ENCODE measurements at regions of chr4 and their contacts with region 1.

Region 1: DNA sequence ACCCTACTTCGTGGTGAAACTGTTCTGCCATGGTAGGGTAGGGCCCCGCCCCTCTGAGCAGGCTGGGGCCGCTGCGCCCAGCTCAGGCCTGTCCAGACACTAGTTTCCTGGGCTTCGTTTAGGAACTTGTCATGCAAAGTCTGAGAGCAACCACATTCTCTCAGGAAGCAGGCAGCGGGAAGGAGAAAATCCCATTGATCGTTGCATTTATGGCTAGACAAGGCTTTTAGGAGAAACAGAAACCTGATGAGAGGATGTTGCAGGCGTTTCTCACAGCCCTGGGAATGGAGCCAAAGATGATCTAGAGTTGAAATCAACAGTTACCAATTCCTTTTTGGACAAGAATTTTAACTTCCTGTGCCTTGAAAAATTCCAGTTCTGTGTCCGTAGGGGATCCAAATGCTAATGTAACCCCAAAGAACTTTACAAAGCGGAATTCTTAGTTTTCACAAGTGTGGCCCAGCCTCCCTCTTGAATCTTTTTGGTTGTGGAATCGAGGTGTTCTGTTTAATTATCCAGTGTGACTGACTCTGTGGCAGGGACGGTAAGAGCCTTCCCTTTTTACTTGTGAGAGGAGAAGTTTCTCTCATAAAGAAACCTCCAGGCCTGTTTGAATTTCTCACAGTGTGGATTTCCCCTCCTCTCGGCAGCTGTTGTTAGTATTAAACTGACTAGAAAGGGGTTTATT is 4.5 kb upstream of the CXCL9 start:
- DNase-seq: peak; percentile 91
- ATAC-seq: peak; percentile 56
- H3K4me3 ChIP-seq: no peak overlapping the region; the same call in 1 of the 2 replicates
- H3K27ac ChIP-seq: peak overlapping the region; percentile 85
- H3K4me1 ChIP-seq: peaks cover 19% of the 10 kb centered on the region
- H3K27me3 ChIP-seq: no peaks in the 10 kb centered on the region
- CTCF ChIP-seq: no peak
- POLR2A ChIP-seq: no peak
- RAD21 ChIP-seq: no peak

Region 2: GRCh38 chr4:76028350-76028765 is 16.5 kb after region 1 on chr4:
- CTCF ChIA-PET with region 1: no interaction called
- POLR2A ChIA-PET with region 1: no interaction called
- dilution Hi-C with region 1: no loop called
- in situ Hi-C with region 1: no loop called
- intact Hi-C with region 1: loop called (anchors 2 kb)
- DNase-seq: peak; percentile 17
- ATAC-seq: peak; percentile 70
- H3K4me3 ChIP-seq: peak overlapping the region; percentile 40
- H3K27ac ChIP-seq: no peak overlapping the region
- H3K4me1 ChIP-seq: 0 out of 2 replicates have a peak, but pooled peaks cover under 1% of the 10 kb centered on the region
- H3K27me3 ChIP-seq: peaks cover 3% of the 10 kb centered on the region; the same call in 1 of the 2 replicates
- CTCF ChIP-seq: no peak
- POLR2A ChIP-seq: no peak
- RAD21 ChIP-seq: no peak

Region 3: GRCh38 chr4:76141241-76141640 is 129.4 kb after region 1 on chr4:
- CTCF ChIA-PET with region 1: no interaction called
- POLR2A ChIA-PET with region 1: interaction called, 11 read pairs
- dilution Hi-C with region 1: no loop called
- in situ Hi-C with region 1: no loop called
- intact Hi-C with region 1: no loop called
- DNase-seq: no peak
- ATAC-seq: no peak
- H3K4me3 ChIP-seq: no peak overlapping the region
- H3K27ac ChIP-seq: no peak overlapping the region
- H3K4me1 ChIP-seq: no peaks in the 10 kb centered on the region
- H3K27me3 ChIP-seq: no peaks in the 10 kb centered on the region
- CTCF ChIP-seq: no peak
- POLR2A ChIP-seq: no peak
- RAD21 ChIP-seq: no peak

Measured in IMR-90 (cell line).